Activated CD4-positive, alpha-beta memory T cell treated with anti-CD3 and anti-CD28 coated beads for 36 hours (primary cell): ENCODE measurements at regions of chr19 and their contacts with region 1.

Region 1: GRCh38 chr19:39792999-39793546 is 14.4 kb downstream of the LEUTX start:
- DNase-seq: peak; percentile 83
- H3K4me3 Mint-ChIP-seq: peak overlapping the region; percentile 73
- H3K27ac Mint-ChIP-seq: no peak overlapping the region
- H3K4me1 Mint-ChIP-seq: peaks cover 9% of the 10 kb centered on the region
- H3K27me3 Mint-ChIP-seq: peaks cover 2% of the 10 kb centered on the region

Region 2: GRCh38 chr19:39514840-39515550 is 278.1 kb before region 1 on chr19 and contains the start of gene SELENOV:
- CTCF ChIA-PET with region 1: no interaction called
- POLR2A ChIA-PET with region 1: no interaction called
- intact Hi-C with region 1: no loop called
- DNase-seq: no peak
- H3K4me3 Mint-ChIP-seq: peak within 1 kb of the TSS; percentile 43
- H3K27ac Mint-ChIP-seq: no peak within 1 kb of the TSS
- H3K4me1 Mint-ChIP-seq: peaks cover 9% of the 10 kb centered on the region
- H3K27me3 Mint-ChIP-seq: peaks cover 40% of the 10 kb centered on the region
- total RNA-seq, gene SELENOV: not detected

Region 3: GRCh38 chr19:39765091-39766076 is 27.7 kb before region 1 on chr19:
- CTCF ChIA-PET with region 1: interaction called, 12 read pairs
- POLR2A ChIA-PET with region 1: no interaction called
- intact Hi-C with region 1: no loop called
- DNase-seq: peak; percentile 41
- H3K4me3 Mint-ChIP-seq: no peak overlapping the region
- H3K27ac Mint-ChIP-seq: no peak overlapping the region
- H3K4me1 Mint-ChIP-seq: peaks cover 3% of the 10 kb centered on the region
- H3K27me3 Mint-ChIP-seq: peaks cover 7% of the 10 kb centered on the region

Region 4: GRCh38 chr19:39805104-39805503 is 12.0 kb after region 1 on chr19:
- CTCF ChIA-PET with region 1: interaction called, 17 read pairs
- POLR2A ChIA-PET with region 1: no interaction called
- intact Hi-C with region 1: no loop called
- DNase-seq: no peak
- H3K4me3 Mint-ChIP-seq: no peak overlapping the region
- H3K27ac Mint-ChIP-seq: no peak overlapping the region
- H3K4me1 Mint-ChIP-seq: no peaks in the 10 kb centered on the region
- H3K27me3 Mint-ChIP-seq: peaks cover 13% of the 10 kb centered on the region

Region 5: DNA sequence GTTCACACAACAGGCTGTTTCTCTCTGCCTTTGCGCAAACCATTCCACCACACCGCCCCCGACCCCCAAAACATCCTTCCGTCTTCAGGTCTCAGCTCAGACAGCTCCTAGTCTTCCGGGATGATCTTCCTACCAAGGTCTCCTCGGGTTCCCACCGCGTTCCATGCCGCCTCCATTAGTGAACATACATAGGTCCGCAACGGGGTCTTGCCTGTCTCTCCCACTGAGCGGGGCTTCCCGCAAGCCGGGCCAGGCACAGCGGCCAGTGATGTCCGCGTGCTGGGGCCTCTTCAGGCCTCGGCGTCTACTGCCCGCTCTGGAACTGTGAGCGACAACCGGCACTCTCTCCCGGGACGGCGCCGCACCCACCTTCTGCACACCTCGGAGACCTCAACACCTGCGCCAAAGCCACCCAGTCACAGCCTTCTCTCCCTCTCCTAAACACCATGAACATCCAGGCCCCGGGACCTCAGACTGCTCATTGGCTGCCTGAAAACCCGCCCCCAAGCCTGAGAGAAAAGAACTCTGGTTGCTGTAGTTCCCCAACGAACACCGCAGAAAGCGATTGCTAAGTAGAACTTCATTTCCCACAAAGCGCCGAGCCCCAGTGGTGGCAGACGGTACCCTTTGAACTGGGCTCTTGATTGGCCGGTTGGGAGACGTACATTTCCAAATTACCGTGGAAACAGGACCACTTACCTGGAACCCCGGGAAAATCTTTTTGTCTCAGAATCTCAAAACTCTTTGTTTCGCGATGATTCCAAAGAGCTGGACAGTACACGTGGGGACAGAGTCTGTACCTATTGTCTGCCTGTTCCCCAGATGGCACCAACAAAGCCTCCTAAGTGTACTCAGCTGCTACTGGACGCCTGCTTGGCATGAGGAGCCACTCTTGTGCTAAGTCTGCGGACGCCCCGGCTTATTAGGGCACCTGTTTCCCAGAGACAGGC is 31.3 kb after region 1 on chr19:
- CTCF ChIA-PET with region 1: interaction called, 13 read pairs
- POLR2A ChIA-PET with region 1: no interaction called
- intact Hi-C with region 1: loop called (anchors 1 kb)
- DNase-seq: peak; percentile 94
- H3K4me3 Mint-ChIP-seq: no peak overlapping the region
- H3K27ac Mint-ChIP-seq: no peak overlapping the region
- H3K4me1 Mint-ChIP-seq: peaks cover 8% of the 10 kb centered on the region
- H3K27me3 Mint-ChIP-seq: no peaks in the 10 kb centered on the region

Region 6: GRCh38 chr19:39846176-39846677 is 53.2 kb after region 1 on chr19 and contains the start of gene FBL:
- CTCF ChIA-PET with region 1: interaction called, 70 read pairs
- POLR2A ChIA-PET with region 1: no interaction called
- intact Hi-C with region 1: loop called (anchors 1 kb)
- DNase-seq: peak; percentile 98
- H3K4me3 Mint-ChIP-seq: peak within 1 kb of the TSS; percentile 94
- H3K27ac Mint-ChIP-seq: peak within 1 kb of the TSS; percentile 90
- H3K4me1 Mint-ChIP-seq: peaks cover 45% of the 10 kb centered on the region
- H3K27me3 Mint-ChIP-seq: no peaks in the 10 kb centered on the region
- total RNA-seq, gene FBL: 579 to 589 TPM